ENCODE measurements at regions of chr9 and their contacts with region 1.

Region 1: DNA sequence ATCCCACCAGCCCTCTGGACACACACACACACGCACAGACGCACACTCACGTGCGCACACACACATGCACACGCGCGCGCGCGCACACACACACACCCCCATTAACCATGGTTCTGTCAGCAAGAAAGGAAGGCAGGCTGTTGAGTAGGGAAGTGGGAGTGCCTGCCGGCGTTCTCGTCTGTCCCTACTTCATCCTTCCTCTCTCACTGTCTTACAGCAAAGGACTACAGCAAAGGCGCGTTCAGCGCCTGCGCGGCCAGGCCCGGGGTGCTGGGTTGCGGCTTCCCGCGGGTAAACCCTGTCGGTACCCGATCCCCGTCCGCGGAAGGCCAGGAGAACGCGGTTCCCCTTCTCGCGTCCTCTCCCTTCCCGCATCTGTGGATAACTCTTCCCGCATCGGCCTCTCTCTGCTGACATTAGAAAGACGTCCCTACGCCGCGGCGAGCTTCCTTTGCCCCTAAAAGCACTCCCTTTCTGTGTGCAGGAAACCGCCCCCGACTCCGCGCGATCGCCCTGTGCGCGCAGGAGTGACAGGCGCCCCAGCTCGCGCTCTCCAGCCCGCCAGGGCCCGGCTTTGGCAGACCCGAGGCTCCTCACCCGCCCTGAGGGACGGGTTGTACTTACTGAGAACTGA is 219.2 kb downstream of the AGTPBP1 start:
- DNase-seq: peak; percentile 86

Region 2: GRCh38 chr9:85064811-85065371 is 457.7 kb before region 1 on chr9:
- intact Hi-C with region 1: no loop called
- DNase-seq: no peak

Region 3: GRCh38 chr9:85554349-85554748 is 31.8 kb after region 1 on chr9:
- intact Hi-C with region 1: loop called in 1 of 2 experiments (anchors 1 kb)
- DNase-seq: no peak

Region 4: DNA sequence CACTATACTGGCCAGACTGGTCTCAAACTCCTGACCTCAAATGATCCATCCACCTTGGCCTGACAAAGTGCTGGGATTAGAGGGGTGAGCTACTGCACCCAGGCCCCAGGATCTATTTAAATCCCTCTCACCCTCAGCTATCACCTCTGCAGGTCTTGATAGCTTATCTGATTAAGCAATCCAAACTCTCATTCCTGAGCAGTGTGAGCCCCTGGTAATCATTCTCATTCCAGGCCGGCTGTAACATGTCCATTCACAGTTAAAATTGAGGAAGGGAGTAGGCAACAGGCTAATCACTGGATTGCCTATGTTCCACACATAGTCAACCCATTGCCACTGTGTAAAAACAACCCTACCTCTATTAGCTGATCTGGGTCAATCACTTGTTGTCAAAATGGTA is 108.1 kb after region 1 on chr9:
- intact Hi-C with region 1: no loop called
- DNase-seq: no peak

Measured in posterior vena cava (tissue), 2 donors.